Activated B cell treated with CpG ODN at 0.5 μM for 24 hours (primary cell): ENCODE measurements at regions of chr9 and their contacts with region 1.

Region 1: GRCh38 chr9:108953983-108954574 is 19.9 kb downstream of the ABITRAM start:
- DNase-seq: no peak
- ATAC-seq: no peak
- H3K4me3 Mint-ChIP-seq: no peak overlapping the region
- H3K27ac Mint-ChIP-seq: no peak overlapping the region
- H3K4me1 Mint-ChIP-seq: no peaks in the 10 kb centered on the region
- H3K27me3 Mint-ChIP-seq: no peaks in the 10 kb centered on the region
- CTCF ChIP-seq: peak; percentile 41

Region 2: GRCh38 chr9:107465467-107466451 is 1488.3 kb before region 1 on chr9:
- CTCF ChIA-PET with region 1: interaction called, 6 read pairs
- POLR2A ChIA-PET with region 1: no interaction called
- intact Hi-C with region 1: loop called (anchors 5 kb)
- DNase-seq: peak; percentile 50
- ATAC-seq: peak; percentile 90
- H3K4me3 Mint-ChIP-seq: peak overlapping the region; percentile 67
- H3K27ac Mint-ChIP-seq: no peak overlapping the region
- H3K4me1 Mint-ChIP-seq: peaks cover 8% of the 10 kb centered on the region
- H3K27me3 Mint-ChIP-seq: peaks cover 30% of the 10 kb centered on the region
- CTCF ChIP-seq: no peak

Region 3: DNA sequence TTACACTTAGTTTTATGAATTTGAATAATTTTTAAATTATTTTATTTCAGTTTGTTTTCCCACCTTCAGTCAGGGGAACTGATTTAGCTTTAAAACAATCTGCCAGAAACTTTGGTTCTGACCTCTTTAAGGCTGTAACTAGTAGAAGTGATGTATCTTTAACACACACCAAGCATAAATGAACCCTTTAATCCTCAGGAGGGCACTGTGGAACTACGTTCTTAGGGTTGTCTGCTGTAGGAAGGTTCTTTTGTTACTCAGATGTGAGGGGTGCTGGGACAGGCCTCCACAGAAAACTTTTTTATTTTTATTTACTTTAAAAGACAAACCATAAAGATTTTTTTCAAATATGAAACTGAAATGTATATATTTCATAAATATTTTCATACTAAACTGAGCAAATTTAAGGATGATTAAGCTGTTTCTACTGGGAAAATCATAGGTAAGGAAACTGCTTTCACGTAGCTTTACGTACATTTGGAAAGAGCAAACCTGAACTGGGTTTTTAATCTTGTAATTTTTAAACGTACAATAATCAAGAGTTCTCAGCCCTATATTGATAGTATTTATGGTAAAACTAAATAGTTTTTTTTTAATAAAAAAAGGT is 1469.9 kb before region 1 on chr9:
- CTCF ChIA-PET with region 1: no interaction called
- POLR2A ChIA-PET with region 1: no interaction called
- intact Hi-C with region 1: loop called (anchors 5 kb)
- DNase-seq: no peak
- ATAC-seq: peak; percentile 45
- H3K4me3 Mint-ChIP-seq: no peak overlapping the region
- H3K27ac Mint-ChIP-seq: no peak overlapping the region
- H3K4me1 Mint-ChIP-seq: peaks cover 10% of the 10 kb centered on the region
- H3K27me3 Mint-ChIP-seq: peaks cover 20% of the 10 kb centered on the region
- CTCF ChIP-seq: no peak

Region 4: DNA sequence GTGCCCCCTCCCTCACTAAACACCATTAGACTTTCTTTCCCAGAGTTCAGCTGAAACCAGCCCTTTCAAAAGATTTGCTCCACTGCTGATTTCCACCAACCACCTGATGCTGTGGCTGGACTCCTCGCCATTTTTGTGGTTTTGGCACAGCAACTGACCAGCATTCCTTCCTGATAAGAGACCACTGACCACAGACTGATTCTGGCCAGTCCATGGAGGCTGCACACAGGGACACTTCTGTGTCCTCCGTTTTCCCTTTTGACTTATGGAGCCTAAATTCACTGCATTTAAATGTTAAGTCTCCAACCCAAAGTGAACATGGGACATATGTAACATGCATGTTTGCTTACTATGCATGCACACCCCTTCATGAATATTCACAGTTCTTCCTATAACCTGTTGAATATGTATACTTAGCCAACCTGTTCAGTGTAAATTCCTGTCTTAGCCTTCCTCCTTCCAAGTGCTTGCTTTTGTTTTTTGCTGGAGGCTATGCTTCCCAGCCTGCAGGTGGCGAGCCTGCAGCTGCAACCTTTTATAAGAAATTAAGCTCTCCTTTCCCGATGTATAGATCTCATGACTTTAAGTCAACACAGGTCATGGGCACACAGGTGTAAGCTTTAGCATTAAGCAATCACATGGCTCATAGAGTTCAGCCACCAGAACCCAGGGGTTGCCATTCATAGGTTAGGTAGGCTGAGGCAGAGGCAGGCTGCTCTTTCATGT is 177.0 kb before region 1 on chr9:
- CTCF ChIA-PET with region 1: no interaction called
- POLR2A ChIA-PET with region 1: no interaction called
- intact Hi-C with region 1: loop called (anchors 10 kb)
- DNase-seq: no peak
- ATAC-seq: no peak
- H3K4me3 Mint-ChIP-seq: no peak overlapping the region
- H3K27ac Mint-ChIP-seq: no peak overlapping the region
- H3K4me1 Mint-ChIP-seq: peaks cover 1% of the 10 kb centered on the region
- H3K27me3 Mint-ChIP-seq: peaks cover 8% of the 10 kb centered on the region
- CTCF ChIP-seq: no peak

Region 5: GRCh38 chr9:108933718-108934322 is 20.3 kb before region 1 on chr9 and contains the start of gene ELP1:
- CTCF ChIA-PET with region 1: no interaction called
- POLR2A ChIA-PET with region 1: no interaction called
- intact Hi-C with region 1: loop called (anchors 1 kb)
- DNase-seq: peak; percentile 86
- ATAC-seq: peak; percentile 83
- H3K4me3 Mint-ChIP-seq: peak within 1 kb of the TSS; percentile 97
- H3K27ac Mint-ChIP-seq: peak within 1 kb of the TSS; percentile 89
- H3K4me1 Mint-ChIP-seq: peaks cover 23% of the 10 kb centered on the region
- H3K27me3 Mint-ChIP-seq: no peaks in the 10 kb centered on the region
- CTCF ChIP-seq: no peak
- total RNA-seq, gene ELP1: 20.3 and 25.0 TPM in 2 replicates

Region 6: GRCh38 chr9:109005678-109006077 is 51.6 kb after region 1 on chr9:
- CTCF ChIA-PET with region 1: interaction called, 3 read pairs
- POLR2A ChIA-PET with region 1: no interaction called
- intact Hi-C with region 1: loop called (anchors 5 kb)
- DNase-seq: no peak
- ATAC-seq: no peak
- H3K4me3 Mint-ChIP-seq: no peak overlapping the region
- H3K27ac Mint-ChIP-seq: no peak overlapping the region
- H3K4me1 Mint-ChIP-seq: peaks cover 2% of the 10 kb centered on the region
- H3K27me3 Mint-ChIP-seq: peaks cover 5% of the 10 kb centered on the region
- CTCF ChIP-seq: no peak

Region 7: GRCh38 chr9:109027176-109027575 is 73.1 kb after region 1 on chr9:
- CTCF ChIA-PET with region 1: no interaction called
- POLR2A ChIA-PET with region 1: no interaction called
- intact Hi-C with region 1: no loop called
- DNase-seq: no peak
- ATAC-seq: no peak
- H3K4me3 Mint-ChIP-seq: no peak overlapping the region
- H3K27ac Mint-ChIP-seq: no peak overlapping the region
- H3K4me1 Mint-ChIP-seq: no peaks in the 10 kb centered on the region
- H3K27me3 Mint-ChIP-seq: no peaks in the 10 kb centered on the region
- CTCF ChIP-seq: no peak